Naive thymus-derived CD4-positive, alpha-beta T cell (primary cell): ENCODE measurements at regions of chr15 and their contacts with region 1.

Region 1: GRCh38 chr15:38354315-38354929 is 99.5 kb upstream of the FAM98B start:
- DNase-seq: peak in 7 of 9 donors; percentile 14 to 46 (median 38)
- ATAC-seq: peak; percentile 57
- H3K4me3 ChIP-seq: no peak overlapping the region
- H3K4me3 Mint-ChIP-seq: no peak overlapping the region
- H3K27ac ChIP-seq: no peak overlapping the region
- H3K27ac Mint-ChIP-seq: peak overlapping the region in 1 of 9 donors; percentile 30
- H3K4me1 ChIP-seq: no peaks in the 10 kb centered on the region
- H3K4me1 Mint-ChIP-seq: no peaks in the 10 kb centered on the region
- H3K27me3 ChIP-seq: no peaks in the 10 kb centered on the region
- H3K27me3 Mint-ChIP-seq: peaks cover 3 to 23% (median 12%) of the 10 kb centered on the region in 5 donors

Region 2: DNA sequence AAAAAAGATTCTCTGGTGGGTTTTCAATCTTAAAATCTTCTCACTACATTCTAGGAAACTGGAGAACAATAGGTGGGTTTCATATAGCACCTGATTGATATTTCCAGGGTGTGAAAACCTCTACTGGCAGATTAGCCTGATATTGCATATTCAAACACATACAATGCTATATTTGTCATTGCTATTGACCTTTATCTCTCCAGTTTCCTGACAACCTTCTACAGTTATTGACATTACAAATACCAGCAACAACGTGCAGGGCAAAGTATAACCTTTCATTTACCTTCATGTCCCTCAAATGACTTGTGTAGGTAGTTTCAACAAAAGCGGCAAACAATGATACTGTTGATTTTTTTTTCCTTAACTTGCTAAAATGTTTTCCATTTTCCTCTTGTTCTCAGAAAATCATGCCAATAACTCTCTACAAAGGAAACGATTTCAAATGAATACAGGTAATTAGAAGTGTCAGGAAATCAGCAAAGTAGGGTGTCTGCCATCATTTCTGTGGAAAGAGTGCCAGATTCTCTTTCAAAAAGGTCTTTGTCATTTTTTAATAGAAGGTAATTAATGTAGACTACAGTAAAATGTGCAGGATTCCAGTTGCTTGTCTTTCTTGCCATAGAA is 1847.6 kb before region 1 on chr15:
- CTCF ChIA-PET with region 1: no interaction called
- POLR2A ChIA-PET with region 1: no interaction called
- intact Hi-C with region 1: loop called in 1 of 2 experiments (anchors 2 kb)
- DNase-seq: no peak
- ATAC-seq: no peak
- H3K4me3 ChIP-seq: no peak overlapping the region
- H3K4me3 Mint-ChIP-seq: no peak overlapping the region
- H3K27ac ChIP-seq: no peak overlapping the region
- H3K27ac Mint-ChIP-seq: no peak overlapping the region
- H3K4me1 ChIP-seq: no peaks in the 10 kb centered on the region
- H3K4me1 Mint-ChIP-seq: no peaks in the 10 kb centered on the region
- H3K27me3 ChIP-seq: no peaks in the 10 kb centered on the region
- H3K27me3 Mint-ChIP-seq: peaks cover 2 to 28% (median 27%) of the 10 kb centered on the region in 5 donors

Region 3: DNA sequence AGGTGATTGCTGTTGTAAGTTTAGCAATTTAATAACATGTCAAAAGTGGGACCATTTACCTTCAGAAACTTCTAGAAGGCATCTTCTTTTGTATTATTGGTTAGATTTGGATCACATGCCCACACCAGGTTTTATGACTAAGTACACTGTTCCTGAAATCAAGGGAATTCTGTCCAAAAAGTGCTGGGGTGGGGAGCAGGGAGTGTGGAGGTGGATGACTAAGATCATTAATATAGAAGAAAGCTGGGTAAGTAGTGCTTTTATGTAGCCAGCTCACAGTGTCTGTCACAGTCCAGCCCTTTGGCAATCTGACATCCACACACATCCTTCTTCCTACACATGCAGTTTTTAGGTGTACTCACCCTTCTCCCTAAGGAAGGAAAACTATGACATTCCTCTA is 299.9 kb before region 1 on chr15:
- CTCF ChIA-PET with region 1: no interaction called
- POLR2A ChIA-PET with region 1: no interaction called
- intact Hi-C with region 1: no loop called
- DNase-seq: no peak
- ATAC-seq: no peak
- H3K4me3 ChIP-seq: no peak overlapping the region
- H3K4me3 Mint-ChIP-seq: no peak overlapping the region
- H3K27ac ChIP-seq: no peak overlapping the region
- H3K27ac Mint-ChIP-seq: no peak overlapping the region
- H3K4me1 ChIP-seq: no peaks in the 10 kb centered on the region
- H3K4me1 Mint-ChIP-seq: peaks cover 0 to 4% (median 0%) of the 10 kb centered on the region in 7 donors
- H3K27me3 ChIP-seq: no peaks in the 10 kb centered on the region
- H3K27me3 Mint-ChIP-seq: peaks cover 4 to 28% (median 14%) of the 10 kb centered on the region in 5 donors

Region 4: GRCh38 chr15:38843736-38844590 is 489.5 kb after region 1 on chr15:
- CTCF ChIA-PET with region 1: no interaction called
- POLR2A ChIA-PET with region 1: no interaction called
- intact Hi-C with region 1: no loop called
- DNase-seq: no peak
- ATAC-seq: no peak
- H3K4me3 ChIP-seq: no peak overlapping the region
- H3K4me3 Mint-ChIP-seq: no peak overlapping the region
- H3K27ac ChIP-seq: no peak overlapping the region
- H3K27ac Mint-ChIP-seq: no peak overlapping the region
- H3K4me1 ChIP-seq: no peaks in the 10 kb centered on the region
- H3K4me1 Mint-ChIP-seq: peaks cover 0 to 3% (median 0%) of the 10 kb centered on the region in 7 donors
- H3K27me3 ChIP-seq: peaks cover 0 to 6% of the 10 kb centered on the region in 2 donors
- H3K27me3 Mint-ChIP-seq: peaks cover 17 to 57% (median 40%) of the 10 kb centered on the region in 5 donors